Panc1 (cell line): ENCODE measurements at regions of chr11 and their contacts with region 1.

Region 1: GRCh38 chr11:82701847-82702520 is 31.7 kb downstream of the FAM181B start:
- DNase-seq: no peak
- ATAC-seq: peak; percentile 68
- H3K4me3 ChIP-seq: no peak overlapping the region
- H3K27ac ChIP-seq: no peak overlapping the region
- H3K4me1 ChIP-seq: no peaks in the 10 kb centered on the region
- H3K27me3 ChIP-seq: peaks cover 6% of the 10 kb centered on the region; the same call in 1 of the 2 replicates
- CTCF ChIP-seq: peak; percentile 79

Region 2: DNA sequence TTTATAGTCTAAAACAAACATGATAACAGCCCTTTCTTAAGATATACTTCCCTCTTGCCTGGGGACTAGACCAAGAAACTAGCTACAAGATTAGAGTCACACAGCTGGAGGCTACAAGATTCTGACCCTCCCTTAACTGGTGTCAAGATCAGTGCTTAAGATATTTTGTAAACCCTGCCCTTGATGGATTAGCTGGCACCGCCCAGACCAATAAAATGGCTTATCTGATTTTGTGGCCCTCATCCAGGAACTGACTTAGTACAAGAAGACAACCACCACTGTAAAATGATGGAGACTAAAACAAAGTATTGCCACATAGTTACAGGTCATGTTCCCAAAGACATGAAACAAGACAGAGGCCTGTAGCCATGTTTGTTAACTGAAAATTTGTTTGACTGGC is 21.7 kb before region 1 on chr11:
- CTCF ChIA-PET with region 1: interaction called, 11 read pairs
- POLR2A ChIA-PET with region 1: no interaction called
- in situ Hi-C with region 1: no loop called
- intact Hi-C with region 1: no loop called
- DNase-seq: no peak
- ATAC-seq: peak; percentile 40; the same call in 1 of the 2 replicates
- H3K4me3 ChIP-seq: no peak overlapping the region
- H3K27ac ChIP-seq: no peak overlapping the region
- H3K4me1 ChIP-seq: peaks cover 3% of the 10 kb centered on the region; the same call in 1 of the 2 replicates
- H3K27me3 ChIP-seq: peaks cover 10% of the 10 kb centered on the region
- CTCF ChIP-seq: no peak

Region 3: GRCh38 chr11:82796998-82797964 is 95.3 kb after region 1 on chr11:
- CTCF ChIA-PET with region 1: no interaction called
- POLR2A ChIA-PET with region 1: no interaction called
- in situ Hi-C with region 1: no loop called
- intact Hi-C with region 1: no loop called
- DNase-seq: no peak
- ATAC-seq: no peak
- H3K4me3 ChIP-seq: no peak overlapping the region
- H3K27ac ChIP-seq: no peak overlapping the region
- H3K4me1 ChIP-seq: no peaks in the 10 kb centered on the region
- H3K27me3 ChIP-seq: no peaks in the 10 kb centered on the region; the same call in none of the 2 replicates
- CTCF ChIP-seq: no peak